ENCODE measurements at regions of chr6 and their contacts with region 1.

Region 1: DNA sequence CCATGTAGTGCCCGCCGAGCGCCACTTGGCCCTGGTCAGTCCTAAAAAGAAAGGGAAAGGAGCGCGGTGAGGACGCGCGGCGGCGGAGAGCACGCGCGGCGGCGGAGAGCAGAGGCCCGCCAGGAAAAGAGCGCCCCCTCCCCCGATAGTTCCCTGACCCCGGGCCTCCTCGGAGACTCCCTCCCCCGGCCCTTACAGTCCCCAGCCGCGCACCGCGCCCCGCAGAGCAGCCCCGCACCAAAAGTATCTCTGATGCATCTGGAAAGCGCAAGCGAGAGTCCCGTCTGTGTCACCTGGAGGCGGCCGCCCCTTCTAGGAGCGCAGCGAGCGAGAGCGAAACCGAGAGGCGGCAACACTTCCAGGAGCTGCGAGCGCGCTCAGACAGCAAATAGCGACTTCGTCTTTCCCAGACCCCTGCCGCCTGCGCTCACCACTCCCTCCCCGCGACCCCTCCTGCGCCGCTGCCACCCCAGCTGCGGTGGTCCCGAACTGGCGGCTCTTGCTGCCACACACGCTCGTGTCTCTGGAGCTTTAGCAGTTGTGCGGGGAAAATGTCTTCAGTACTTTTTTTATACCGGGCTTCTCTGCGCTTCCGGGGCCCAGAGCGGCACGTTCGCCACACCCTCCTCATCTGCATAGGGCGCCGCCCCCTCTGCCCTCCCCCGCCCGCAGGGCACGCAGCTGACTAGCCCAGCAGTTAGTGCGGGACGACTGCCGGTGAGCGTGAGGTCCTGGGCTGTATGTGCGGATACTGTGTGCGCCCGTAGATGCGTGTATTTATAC is at the start of gene TENT5A:
- DNase-seq: peak; percentile 82
- ATAC-seq: peak; percentile 73
- H3K4me3 Mint-ChIP-seq: peak within 1 kb of the TSS; percentile 96
- H3K27ac Mint-ChIP-seq: peak within 1 kb of the TSS; percentile 97
- H3K4me1 Mint-ChIP-seq: peaks cover 40% of the 10 kb centered on the region
- H3K27me3 Mint-ChIP-seq: peaks cover 2% of the 10 kb centered on the region
- CTCF ChIP-seq: no peak
- total RNA-seq, gene TENT5A: 7.5 and 9.4 TPM in 2 replicates

Region 2: DNA sequence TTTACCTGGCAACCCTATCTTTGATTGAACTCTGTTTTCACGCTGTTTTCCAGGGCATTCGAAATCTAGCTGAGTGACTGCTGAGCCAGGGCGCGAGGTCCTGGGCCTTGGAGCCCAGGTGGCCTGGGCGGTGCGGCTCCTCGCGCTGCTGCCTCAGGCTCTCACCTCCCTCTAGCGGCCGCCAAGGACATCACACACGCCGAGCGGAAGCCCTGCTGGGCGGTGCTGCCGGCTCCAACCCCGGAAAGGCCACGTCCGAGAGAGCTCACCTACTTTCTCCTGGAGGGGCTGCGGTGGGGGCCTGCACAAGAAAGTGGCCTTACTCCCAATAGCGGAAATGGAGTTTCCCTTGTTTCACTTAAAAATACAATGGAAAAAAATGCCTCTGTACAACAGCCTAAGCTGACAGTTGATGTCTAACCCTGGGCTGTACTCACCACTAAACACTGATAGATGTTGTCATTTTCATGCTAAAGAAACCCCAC is 1882.7 kb before region 1 on chr6:
- CTCF ChIA-PET with region 1: no interaction called
- POLR2A ChIA-PET with region 1: no interaction called
- intact Hi-C with region 1: loop called (anchors 5 kb)
- DNase-seq: peak; percentile 65
- ATAC-seq: peak; percentile 100
- H3K4me3 Mint-ChIP-seq: peak overlapping the region; percentile 65
- H3K27ac Mint-ChIP-seq: no peak overlapping the region
- H3K4me1 Mint-ChIP-seq: peaks cover 10% of the 10 kb centered on the region
- H3K27me3 Mint-ChIP-seq: peaks cover 4% of the 10 kb centered on the region
- CTCF ChIP-seq: peak; percentile 71

Region 3: GRCh38 chr6:80106418-80107235 is 1645.7 kb before region 1 on chr6 and contains the start of gene BCKDHB:
- CTCF ChIA-PET with region 1: interaction called, 3 read pairs
- POLR2A ChIA-PET with region 1: interaction called, 8 read pairs
- intact Hi-C with region 1: loop called (anchors 1 kb)
- DNase-seq: peak; percentile 89
- ATAC-seq: peak; percentile 98
- H3K4me3 Mint-ChIP-seq: peak within 1 kb of the TSS; percentile 91
- H3K27ac Mint-ChIP-seq: peak within 1 kb of the TSS; percentile 85
- H3K4me1 Mint-ChIP-seq: peaks cover 18% of the 10 kb centered on the region
- H3K27me3 Mint-ChIP-seq: peaks cover 7% of the 10 kb centered on the region
- CTCF ChIP-seq: no peak
- total RNA-seq, gene BCKDHB: 16.6 and 17.0 TPM in 2 replicates

Region 4: GRCh38 chr6:80605165-80605989 is 1147.0 kb before region 1 on chr6:
- CTCF ChIA-PET with region 1: interaction called, 29 read pairs
- POLR2A ChIA-PET with region 1: interaction called, 4 read pairs
- intact Hi-C with region 1: no loop called
- DNase-seq: no peak
- ATAC-seq: no peak
- H3K4me3 Mint-ChIP-seq: no peak overlapping the region
- H3K27ac Mint-ChIP-seq: no peak overlapping the region
- H3K4me1 Mint-ChIP-seq: no peaks in the 10 kb centered on the region
- H3K27me3 Mint-ChIP-seq: no peaks in the 10 kb centered on the region
- CTCF ChIP-seq: no peak

Region 5: DNA sequence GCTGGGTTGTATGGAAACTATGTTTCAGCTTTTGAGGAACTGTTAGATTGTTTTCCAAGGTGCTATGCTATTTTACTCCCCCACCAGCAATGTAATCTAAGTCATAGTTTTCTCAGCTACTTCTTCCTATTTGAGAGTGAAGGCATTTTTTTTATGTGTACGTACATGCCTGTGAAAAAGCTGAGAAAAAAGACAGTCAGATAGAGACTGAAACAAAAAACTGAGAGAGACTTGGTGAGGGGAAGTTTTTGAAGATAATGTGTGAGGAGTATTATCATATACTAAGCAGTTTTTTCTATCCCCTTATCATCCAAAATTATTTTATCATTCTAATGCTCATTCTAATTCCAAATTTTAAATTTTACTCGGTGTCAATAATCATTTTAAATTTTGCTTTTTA is 865.9 kb before region 1 on chr6:
- CTCF ChIA-PET with region 1: no interaction called
- POLR2A ChIA-PET with region 1: no interaction called
- intact Hi-C with region 1: no loop called
- DNase-seq: no peak
- ATAC-seq: no peak
- H3K4me3 Mint-ChIP-seq: no peak overlapping the region
- H3K27ac Mint-ChIP-seq: no peak overlapping the region
- H3K4me1 Mint-ChIP-seq: no peaks in the 10 kb centered on the region
- H3K27me3 Mint-ChIP-seq: no peaks in the 10 kb centered on the region
- CTCF ChIP-seq: no peak

Region 6: GRCh38 chr6:81734085-81734484 is 18.2 kb before region 1 on chr6:
- CTCF ChIA-PET with region 1: interaction called, 15 read pairs
- POLR2A ChIA-PET with region 1: no interaction called
- intact Hi-C with region 1: no loop called
- DNase-seq: no peak
- ATAC-seq: no peak
- H3K4me3 Mint-ChIP-seq: no peak overlapping the region
- H3K27ac Mint-ChIP-seq: no peak overlapping the region
- H3K4me1 Mint-ChIP-seq: no peaks in the 10 kb centered on the region
- H3K27me3 Mint-ChIP-seq: no peaks in the 10 kb centered on the region
- CTCF ChIP-seq: no peak

Region 7: GRCh38 chr6:82006027-82006738 is 253.9 kb after region 1 on chr6:
- CTCF ChIA-PET with region 1: no interaction called
- POLR2A ChIA-PET with region 1: no interaction called
- intact Hi-C with region 1: loop called (anchors 10 kb)
- DNase-seq: no peak
- ATAC-seq: no peak
- H3K4me3 Mint-ChIP-seq: no peak overlapping the region
- H3K27ac Mint-ChIP-seq: no peak overlapping the region
- H3K4me1 Mint-ChIP-seq: no peaks in the 10 kb centered on the region
- H3K27me3 Mint-ChIP-seq: no peaks in the 10 kb centered on the region
- CTCF ChIP-seq: no peak

Region 8: GRCh38 chr6:82704048-82704447 is 951.7 kb after region 1 on chr6:
- CTCF ChIA-PET with region 1: no interaction called
- POLR2A ChIA-PET with region 1: no interaction called
- intact Hi-C with region 1: no loop called
- DNase-seq: no peak
- ATAC-seq: no peak
- H3K4me3 Mint-ChIP-seq: no peak overlapping the region
- H3K27ac Mint-ChIP-seq: no peak overlapping the region
- H3K4me1 Mint-ChIP-seq: no peaks in the 10 kb centered on the region
- H3K27me3 Mint-ChIP-seq: no peaks in the 10 kb centered on the region
- CTCF ChIP-seq: no peak

Region 9: DNA sequence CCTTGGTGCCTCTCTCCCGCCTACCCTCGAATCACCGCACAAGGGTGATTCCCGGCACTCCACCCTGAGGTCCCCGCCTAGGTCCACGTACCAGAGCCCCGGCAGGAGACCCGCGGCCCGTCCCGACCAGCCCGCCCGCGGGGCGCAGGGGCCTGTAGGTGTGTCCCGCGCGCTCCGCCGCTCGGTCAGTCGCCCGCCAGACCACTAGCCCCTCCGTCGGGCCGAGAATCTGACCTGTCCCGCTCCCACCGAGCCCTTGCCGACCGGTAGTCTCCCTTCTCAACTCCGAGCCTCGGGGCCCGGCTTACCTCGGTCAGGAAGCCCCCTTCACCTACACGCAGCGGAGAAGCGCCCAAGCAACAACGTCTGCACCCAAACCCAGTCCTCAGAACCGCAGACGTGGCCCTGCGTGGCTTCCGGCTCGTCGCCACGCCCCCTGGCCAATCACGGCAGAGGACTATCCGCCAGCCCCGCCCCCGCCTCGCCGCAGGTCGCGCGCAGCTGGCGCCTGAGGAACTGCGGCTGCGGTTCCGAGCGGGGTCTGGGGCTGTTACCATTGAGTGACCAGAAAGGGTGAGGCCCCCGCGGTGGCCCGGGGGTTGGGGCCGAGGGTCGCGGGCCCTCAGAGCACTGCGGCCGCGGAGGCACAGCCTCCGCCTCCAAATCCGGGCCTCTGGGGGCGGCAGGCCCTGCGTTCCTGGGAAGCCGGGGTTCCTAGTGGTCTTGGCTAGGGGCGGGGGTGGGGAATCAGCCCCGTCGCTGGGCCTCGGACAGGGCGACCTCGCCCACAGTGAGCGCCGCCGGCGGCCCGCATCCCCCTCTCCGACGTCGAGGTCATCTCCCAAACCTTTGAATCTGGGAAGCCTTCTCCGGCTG is 1440.8 kb after region 1 on chr6 and contains the starts of genes PGM3 and RWDD2A:
- CTCF ChIA-PET with region 1: no interaction called
- POLR2A ChIA-PET with region 1: no interaction called
- intact Hi-C with region 1: loop called (anchors 5 kb)
- DNase-seq: peak; percentile 91
- ATAC-seq: peak; percentile 97
- H3K4me3 Mint-ChIP-seq: peak within 1 kb of the TSS; percentile 96
- H3K27ac Mint-ChIP-seq: peak within 1 kb of the TSS; percentile 91
- H3K4me1 Mint-ChIP-seq: peaks cover 31% of the 10 kb centered on the region
- H3K27me3 Mint-ChIP-seq: no peaks in the 10 kb centered on the region
- CTCF ChIP-seq: no peak
- total RNA-seq, gene PGM3: 18.2 and 20.1 TPM in 2 replicates
- total RNA-seq, gene RWDD2A: 1.7 and 1.8 TPM in 2 replicates